ENCODE measurements at regions of chr11 and their contacts with region 1.

Region 1: DNA sequence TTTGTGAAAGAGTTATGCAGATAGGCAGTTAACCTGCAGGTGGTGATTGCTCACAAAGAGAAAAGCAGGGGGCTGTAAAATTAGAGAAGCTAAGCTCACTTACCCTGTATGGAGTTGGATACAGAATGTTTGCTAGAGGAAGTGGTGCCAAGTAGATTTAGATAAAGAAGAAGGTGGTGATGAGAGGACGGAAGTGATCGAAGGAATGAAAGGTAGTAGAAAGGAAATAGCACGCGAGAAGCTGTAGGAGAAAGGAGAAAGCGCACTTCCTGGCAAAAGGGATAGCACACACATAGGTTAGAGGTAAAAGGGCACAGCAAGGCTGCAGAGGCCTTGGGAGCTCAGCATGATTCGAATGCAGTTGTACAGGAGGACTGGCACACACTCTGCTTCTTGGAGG is 87.3 kb upstream of the CTSC start:
- DNase-seq: no peak
- ATAC-seq: no peak
- H3K4me3 ChIP-seq: no peak overlapping the region
- H3K4me3 Mint-ChIP-seq: peak overlapping the region; percentile 16
- H3K27ac ChIP-seq: no peak overlapping the region
- H3K27ac Mint-ChIP-seq: no peak overlapping the region
- H3K4me1 ChIP-seq: peaks cover 21% of the 10 kb centered on the region
- H3K4me1 Mint-ChIP-seq: peaks cover 40% of the 10 kb centered on the region
- H3K27me3 ChIP-seq: no peaks in the 10 kb centered on the region
- H3K27me3 Mint-ChIP-seq: no peaks in the 10 kb centered on the region
- CTCF ChIP-seq: no peak

Region 2: GRCh38 chr11:88414385-88414861 is 10.5 kb before region 1 on chr11:
- CTCF ChIA-PET with region 1: no interaction called
- POLR2A ChIA-PET with region 1: interaction called, 11 read pairs
- intact Hi-C with region 1: no loop called
- DNase-seq: peak in 5 of 14 experiments; percentile 12 to 61 (median 52)
- ATAC-seq: peak; percentile 71
- H3K4me3 ChIP-seq: peak overlapping the region; percentile 9
- H3K4me3 Mint-ChIP-seq: peak overlapping the region; percentile 66
- H3K27ac ChIP-seq: no peak overlapping the region
- H3K27ac Mint-ChIP-seq: peak overlapping the region; percentile 43
- H3K4me1 ChIP-seq: peaks cover 19% of the 10 kb centered on the region
- H3K4me1 Mint-ChIP-seq: peaks cover 48% of the 10 kb centered on the region
- H3K27me3 ChIP-seq: no peaks in the 10 kb centered on the region
- H3K27me3 Mint-ChIP-seq: no peaks in the 10 kb centered on the region
- CTCF ChIP-seq: no peak

Region 3: DNA sequence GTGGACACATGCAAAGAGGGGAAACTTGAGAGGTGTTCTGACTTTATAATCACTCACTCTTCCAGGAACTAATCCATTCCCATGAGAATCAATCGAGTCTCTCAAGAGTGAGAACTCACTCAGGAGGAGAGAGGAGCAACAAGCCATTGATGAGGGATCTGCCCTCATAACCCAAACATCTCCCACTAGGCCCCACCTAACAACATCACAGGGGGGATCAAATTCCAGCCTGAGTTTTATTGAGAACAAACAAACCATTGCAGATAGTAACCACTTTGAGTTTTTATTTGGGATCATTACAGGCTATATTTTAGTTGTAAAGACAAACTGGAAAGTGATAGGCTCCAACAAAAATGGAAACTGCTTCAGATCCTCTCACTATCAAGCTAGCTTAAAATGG is 241.5 kb after region 1 on chr11:
- CTCF ChIA-PET with region 1: no interaction called
- POLR2A ChIA-PET with region 1: no interaction called
- intact Hi-C with region 1: no loop called
- DNase-seq: no peak
- ATAC-seq: no peak
- H3K4me3 ChIP-seq: no peak overlapping the region
- H3K4me3 Mint-ChIP-seq: no peak overlapping the region
- H3K27ac ChIP-seq: no peak overlapping the region
- H3K27ac Mint-ChIP-seq: no peak overlapping the region
- H3K4me1 ChIP-seq: no peaks in the 10 kb centered on the region
- H3K4me1 Mint-ChIP-seq: no peaks in the 10 kb centered on the region
- H3K27me3 ChIP-seq: no peaks in the 10 kb centered on the region
- H3K27me3 Mint-ChIP-seq: no peaks in the 10 kb centered on the region
- CTCF ChIP-seq: no peak

Measured in CD4-positive, alpha-beta T cell (primary cell).